ENCODE measurements at regions of chr3 and their contacts with region 1.

Region 1: DNA sequence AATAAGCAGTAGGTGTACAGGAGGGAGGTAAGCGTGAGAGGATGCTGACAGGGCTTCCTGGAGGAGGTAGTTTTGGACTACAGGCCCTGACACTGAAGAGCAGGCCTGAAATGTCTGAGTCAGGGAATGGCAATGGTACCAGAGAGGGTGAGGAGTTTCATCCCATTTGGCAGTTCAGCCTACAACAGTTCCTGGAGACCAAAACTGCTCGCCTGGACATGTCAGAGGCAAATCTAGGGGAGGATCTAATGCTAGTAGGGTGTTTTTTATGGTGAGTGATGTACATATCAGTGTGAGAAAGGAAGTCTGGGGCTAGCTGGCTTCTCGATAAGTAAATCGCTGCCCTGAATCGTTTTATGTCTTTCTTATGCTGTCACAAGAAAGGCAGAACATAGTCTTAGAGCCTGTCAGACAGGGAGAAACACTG is 13.8 kb upstream of the TNFSF10 start:
- DNase-seq: peak; percentile 98
- H3K4me3 ChIP-seq: no peak overlapping the region
- H3K27ac ChIP-seq: peak overlapping the region; percentile 72
- H3K4me1 ChIP-seq: peaks cover 23% of the 10 kb centered on the region
- H3K27me3 ChIP-seq: no peaks in the 10 kb centered on the region
- CTCF ChIP-seq: no peak

Region 2: GRCh38 chr3:172249039-172249438 is 288.0 kb before region 1 on chr3:
- CTCF ChIA-PET with region 1: no interaction called
- dilution Hi-C with region 1: no loop called
- in situ Hi-C with region 1: no loop called
- intact Hi-C with region 1: no loop called
- DNase-seq: peak; percentile 61
- H3K4me3 ChIP-seq: no peak overlapping the region
- H3K27ac ChIP-seq: peak overlapping the region; percentile 16
- H3K4me1 ChIP-seq: peaks cover 40% of the 10 kb centered on the region
- H3K27me3 ChIP-seq: no peaks in the 10 kb centered on the region
- CTCF ChIP-seq: no peak

Region 3: DNA sequence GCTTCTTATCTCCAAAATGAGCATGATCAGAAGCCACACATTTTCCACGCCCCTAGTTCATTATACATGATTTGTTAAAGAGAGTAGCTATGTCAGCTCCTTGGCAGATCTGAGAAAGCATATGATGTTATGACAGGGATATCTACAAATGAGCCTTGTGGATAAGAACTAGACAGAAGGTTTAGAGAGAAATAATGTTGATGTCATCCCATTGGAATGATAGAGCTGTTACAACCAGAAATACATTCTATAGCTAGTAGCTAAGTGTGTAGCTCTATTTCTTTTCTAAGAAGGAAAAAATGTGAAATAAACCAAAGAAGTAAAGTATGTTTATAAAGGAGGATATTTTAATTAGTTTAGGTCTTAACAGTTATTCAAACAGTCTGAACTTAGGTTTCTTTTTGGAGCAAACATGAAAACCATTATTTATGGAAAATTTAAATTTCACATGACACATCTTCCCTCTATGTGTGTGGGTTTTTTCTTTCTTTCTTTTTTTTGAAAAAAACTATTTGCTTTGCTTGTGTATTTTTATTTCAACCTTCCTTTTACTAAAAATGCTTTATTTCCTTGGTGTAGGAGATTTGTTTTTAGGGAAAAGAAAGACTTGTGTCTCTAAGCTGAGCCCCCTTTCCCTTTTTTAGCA is 256.5 kb before region 1 on chr3:
- CTCF ChIA-PET with region 1: no interaction called
- dilution Hi-C with region 1: no loop called
- in situ Hi-C with region 1: no loop called
- intact Hi-C with region 1: no loop called
- DNase-seq: peak; percentile 57
- H3K4me3 ChIP-seq: no peak overlapping the region
- H3K27ac ChIP-seq: peak overlapping the region; percentile 4
- H3K4me1 ChIP-seq: peaks cover 11% of the 10 kb centered on the region
- H3K27me3 ChIP-seq: no peaks in the 10 kb centered on the region
- CTCF ChIP-seq: no peak

Region 4: GRCh38 chr3:172522871-172523818 is 13.9 kb before region 1 on chr3 and contains the start of gene TNFSF10:
- CTCF ChIA-PET with region 1: no interaction called
- dilution Hi-C with region 1: no loop called
- in situ Hi-C with region 1: no loop called
- intact Hi-C with region 1: loop called (anchors 2 kb)
- DNase-seq: peak; percentile 71
- H3K4me3 ChIP-seq: peak within 1 kb of the TSS; percentile 46 to 59 (median 56)
- H3K27ac ChIP-seq: peak within 1 kb of the TSS; percentile 59
- H3K4me1 ChIP-seq: peaks cover 21% of the 10 kb centered on the region
- H3K27me3 ChIP-seq: no peaks in the 10 kb centered on the region
- CTCF ChIP-seq: no peak
- total RNA-seq, gene TNFSF10: 2.8 to 3.2 TPM